ENCODE measurements at regions of chr7 and their contacts with region 1.

Region 1: GRCh38 chr7:140810830-140811556 is 113.7 kb downstream of the BRAF start:
- DNase-seq: peak; percentile 5
- H3K4me3 ChIP-seq: no peak overlapping the region
- H3K27me3 ChIP-seq: no peaks in the 10 kb centered on the region
- CTCF ChIP-seq: peak; percentile 71

Region 2: DNA sequence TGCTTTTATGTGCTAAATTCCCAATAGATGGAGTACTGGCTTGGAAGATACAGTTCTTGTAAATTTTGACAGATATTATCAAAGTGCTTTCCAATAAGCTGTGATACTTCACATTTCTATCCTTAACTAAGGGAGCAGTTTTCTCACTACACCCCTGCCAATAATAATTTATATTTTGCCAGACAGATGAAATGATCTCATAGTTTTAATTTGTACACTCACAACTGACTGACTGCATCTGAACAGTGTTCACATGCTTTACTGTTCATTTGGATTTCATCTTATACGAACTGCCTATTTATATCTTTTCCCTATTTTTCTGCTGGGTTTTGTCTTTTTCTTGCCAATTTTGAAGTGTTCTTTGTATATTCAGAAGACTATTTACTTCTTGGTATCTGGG is 17.7 kb after region 1 on chr7:
- CTCF ChIA-PET with region 1: interaction called, 13 read pairs
- POLR2A ChIA-PET with region 1: no interaction called
- DNase-seq: no peak
- H3K4me3 ChIP-seq: no peak overlapping the region
- H3K27me3 ChIP-seq: no peaks in the 10 kb centered on the region
- CTCF ChIP-seq: no peak

Region 3: GRCh38 chr7:140983802-140984201 is 172.8 kb after region 1 on chr7:
- CTCF ChIA-PET with region 1: interaction called, 12 read pairs
- POLR2A ChIA-PET with region 1: no interaction called
- DNase-seq: no peak
- H3K4me3 ChIP-seq: no peak overlapping the region
- H3K27me3 ChIP-seq: no peaks in the 10 kb centered on the region
- CTCF ChIP-seq: peak; percentile 25; the same call in 1 of the 2 replicates

Region 4: DNA sequence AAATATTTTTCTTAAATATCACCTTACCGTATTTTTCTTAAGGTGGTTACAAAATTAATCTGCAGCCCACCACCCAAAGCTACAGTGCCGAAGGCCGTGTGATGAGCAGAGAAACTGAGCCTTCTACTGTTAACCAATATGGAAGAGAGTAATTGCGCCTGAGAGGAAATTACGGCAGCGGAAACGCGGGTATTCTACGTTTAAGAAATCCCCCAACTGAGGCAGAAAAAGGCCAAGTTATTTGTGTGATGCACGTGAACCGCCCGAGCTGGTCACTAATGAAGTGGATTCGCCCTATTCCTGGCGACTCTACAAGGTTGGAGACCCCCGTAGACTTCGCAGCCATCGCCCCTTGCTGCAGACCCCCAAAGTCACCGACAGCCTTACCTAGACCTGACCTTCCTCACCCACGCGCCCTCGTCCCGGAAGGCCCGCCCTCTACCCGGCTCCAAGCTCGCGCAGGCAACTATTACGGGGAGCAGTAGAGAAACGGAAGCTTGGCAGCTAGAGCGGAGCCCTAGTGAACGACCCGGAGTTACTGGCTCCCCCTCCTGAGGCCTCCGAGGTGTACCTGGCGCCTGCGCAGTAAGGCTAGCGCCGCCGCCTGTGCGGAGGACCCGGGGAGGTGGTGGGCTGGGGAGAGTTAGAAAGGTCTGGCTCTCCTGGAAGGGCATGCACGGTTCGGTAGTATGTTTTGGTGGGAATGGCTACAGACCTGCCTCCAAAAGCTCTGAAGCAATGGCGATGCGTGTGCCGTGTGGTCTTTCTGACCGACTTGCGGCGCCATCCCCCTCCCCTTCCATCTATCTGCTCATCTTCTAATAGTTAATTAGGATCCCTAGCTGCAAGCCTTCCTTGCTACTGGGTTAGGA is 203.8 kb after region 1 on chr7 and contains the start of gene MRPS33:
- CTCF ChIA-PET with region 1: interaction called, 49 read pairs
- POLR2A ChIA-PET with region 1: no interaction called
- DNase-seq: peak; percentile 62
- H3K4me3 ChIP-seq: peak within 1 kb of the TSS; percentile 59
- H3K27me3 ChIP-seq: no peaks in the 10 kb centered on the region
- CTCF ChIP-seq: peak; percentile 58
- polyA plus RNA-seq, gene MRPS33: 30.6 and 67.1 TPM in 2 replicates

Measured in BJ (cell line).